Panc1 (cell line): ENCODE measurements at regions of chr22 and their contacts with region 1.

Region 1: DNA sequence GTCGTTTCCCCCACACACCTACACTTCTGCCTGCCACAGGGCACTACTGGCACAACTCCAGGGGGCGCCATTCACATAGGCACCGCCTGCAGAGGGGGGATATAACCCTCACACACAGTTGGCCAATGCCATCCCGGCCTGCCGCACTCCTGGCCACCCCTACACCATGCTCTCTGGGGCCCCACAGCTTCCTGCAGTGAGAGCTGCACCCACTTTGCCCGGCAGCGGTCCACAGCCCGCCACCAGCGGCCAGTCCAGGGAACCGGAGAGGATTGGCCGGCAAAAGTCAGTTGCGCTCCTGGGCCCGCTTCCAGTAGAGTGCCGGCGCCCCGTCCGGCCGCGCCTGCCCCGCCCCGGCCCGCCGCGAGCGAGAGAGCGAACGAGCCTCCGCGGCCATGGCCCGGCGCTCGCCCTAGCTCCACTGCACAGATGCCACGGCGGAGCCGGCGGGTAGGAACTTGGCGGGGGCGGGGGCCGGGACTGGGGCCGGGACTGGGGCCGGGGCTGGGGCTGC is 25.6 kb upstream of the SUSD2 start:
- DNase-seq: no peak
- ATAC-seq: peak; percentile 68
- H3K4me3 ChIP-seq: peak overlapping the region; percentile 59 to 71
- H3K27ac ChIP-seq: peak overlapping the region; percentile 59
- H3K4me1 ChIP-seq: peaks cover 26% of the 10 kb centered on the region
- H3K27me3 ChIP-seq: no peaks in the 10 kb centered on the region
- CTCF ChIP-seq: peak; percentile 52

Region 2: GRCh38 chr22:24133187-24133965 is 22.3 kb before region 1 on chr22:
- CTCF ChIA-PET with region 1: interaction called, 4 read pairs
- POLR2A ChIA-PET with region 1: interaction called, 10 read pairs
- in situ Hi-C with region 1: no loop called
- intact Hi-C with region 1: no loop called
- DNase-seq: no peak
- ATAC-seq: peak; percentile 46
- H3K4me3 ChIP-seq: no peak overlapping the region
- H3K27ac ChIP-seq: no peak overlapping the region
- H3K4me1 ChIP-seq: no peaks in the 10 kb centered on the region
- H3K27me3 ChIP-seq: no peaks in the 10 kb centered on the region
- CTCF ChIP-seq: no peak